IMR-90 (cell line): ENCODE measurements at regions of chr6 and their contacts with region 1.

Region 1: GRCh38 chr6:36526066-36526465 is 21.2 kb downstream of the STK38 start:
- DNase-seq: no peak
- ATAC-seq: no peak
- H3K4me3 ChIP-seq: no peak overlapping the region
- H3K27ac ChIP-seq: no peak overlapping the region
- H3K4me1 ChIP-seq: peaks cover 5% of the 10 kb centered on the region
- H3K27me3 ChIP-seq: no peaks in the 10 kb centered on the region
- CTCF ChIP-seq: no peak
- POLR2A ChIP-seq: no peak
- RAD21 ChIP-seq: no peak

Region 2: GRCh38 chr6:36608788-36609563 is 82.9 kb after region 1 on chr6:
- CTCF ChIA-PET with region 1: no interaction called
- POLR2A ChIA-PET with region 1: interaction called, 13 read pairs
- dilution Hi-C with region 1: no loop called
- in situ Hi-C with region 1: no loop called
- intact Hi-C with region 1: no loop called
- DNase-seq: no peak
- ATAC-seq: peak; percentile 4; the same call in 1 of the 2 replicates
- H3K4me3 ChIP-seq: no peak overlapping the region
- H3K27ac ChIP-seq: no peak overlapping the region
- H3K4me1 ChIP-seq: peaks cover 9% of the 10 kb centered on the region; the same call in 1 of the 2 replicates
- H3K27me3 ChIP-seq: no peaks in the 10 kb centered on the region
- CTCF ChIP-seq: no peak
- POLR2A ChIP-seq: no peak; the same call in 1 of the 2 replicates
- RAD21 ChIP-seq: no peak